Aorta (tissue), 5 donors: ENCODE measurements at regions of chr10 and their contacts with region 1.

Region 1: GRCh38 chr10:60444494-60445064 is 54.9 kb upstream of the ANK3 start:
- DNase-seq: no peak
- ATAC-seq: no peak
- H3K4me3 ChIP-seq: no peak overlapping the region
- H3K27ac ChIP-seq: no peak overlapping the region
- H3K4me1 ChIP-seq: peaks cover 2% of the 10 kb centered on the region in 2 donors
- H3K27me3 ChIP-seq: no peaks in the 10 kb centered on the region

Region 2: GRCh38 chr10:60252688-60253087 is 191.9 kb before region 1 on chr10:
- intact Hi-C with region 1: no loop called
- DNase-seq: no peak
- ATAC-seq: no peak
- H3K4me3 ChIP-seq: no peak overlapping the region
- H3K27ac ChIP-seq: no peak overlapping the region
- H3K4me1 ChIP-seq: no peaks in the 10 kb centered on the region
- H3K27me3 ChIP-seq: no peaks in the 10 kb centered on the region

Region 3: GRCh38 chr10:60480865-60481563 is 36.4 kb after region 1 on chr10:
- intact Hi-C with region 1: loop called in 1 of 2 experiments (anchors 5 kb)
- DNase-seq: no peak
- ATAC-seq: peak; percentile 59
- H3K4me3 ChIP-seq: no peak overlapping the region
- H3K27ac ChIP-seq: no peak overlapping the region
- H3K4me1 ChIP-seq: peaks cover 3 to 10% of the 10 kb centered on the region in 2 donors
- H3K27me3 ChIP-seq: no peaks in the 10 kb centered on the region

Region 4: DNA sequence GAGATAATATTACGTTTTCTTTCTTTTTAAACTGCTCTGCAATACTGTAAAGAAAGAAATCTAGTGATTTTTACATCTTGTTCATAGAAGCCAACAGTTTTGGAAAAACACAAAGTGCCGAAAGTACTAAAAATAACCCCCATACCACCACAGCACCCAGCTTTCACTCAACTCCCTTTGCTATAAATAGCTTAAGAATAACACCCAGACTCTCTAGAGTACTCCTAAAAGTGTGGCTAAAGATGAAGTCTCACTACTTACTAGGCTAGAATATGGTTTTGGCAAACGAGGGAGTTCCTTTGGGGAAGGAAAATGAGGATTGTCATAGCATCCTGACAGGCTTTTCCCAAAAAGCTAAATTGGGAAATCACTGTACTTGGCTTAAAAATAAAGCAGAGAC is 96.9 kb after region 1 on chr10:
- intact Hi-C with region 1: loop called (anchors 2 kb)
- DNase-seq: no peak
- ATAC-seq: no peak
- H3K4me3 ChIP-seq: no peak overlapping the region
- H3K27ac ChIP-seq: no peak overlapping the region
- H3K4me1 ChIP-seq: peaks cover 0 to 8% of the 10 kb centered on the region in 2 donors
- H3K27me3 ChIP-seq: no peaks in the 10 kb centered on the region

Region 5: DNA sequence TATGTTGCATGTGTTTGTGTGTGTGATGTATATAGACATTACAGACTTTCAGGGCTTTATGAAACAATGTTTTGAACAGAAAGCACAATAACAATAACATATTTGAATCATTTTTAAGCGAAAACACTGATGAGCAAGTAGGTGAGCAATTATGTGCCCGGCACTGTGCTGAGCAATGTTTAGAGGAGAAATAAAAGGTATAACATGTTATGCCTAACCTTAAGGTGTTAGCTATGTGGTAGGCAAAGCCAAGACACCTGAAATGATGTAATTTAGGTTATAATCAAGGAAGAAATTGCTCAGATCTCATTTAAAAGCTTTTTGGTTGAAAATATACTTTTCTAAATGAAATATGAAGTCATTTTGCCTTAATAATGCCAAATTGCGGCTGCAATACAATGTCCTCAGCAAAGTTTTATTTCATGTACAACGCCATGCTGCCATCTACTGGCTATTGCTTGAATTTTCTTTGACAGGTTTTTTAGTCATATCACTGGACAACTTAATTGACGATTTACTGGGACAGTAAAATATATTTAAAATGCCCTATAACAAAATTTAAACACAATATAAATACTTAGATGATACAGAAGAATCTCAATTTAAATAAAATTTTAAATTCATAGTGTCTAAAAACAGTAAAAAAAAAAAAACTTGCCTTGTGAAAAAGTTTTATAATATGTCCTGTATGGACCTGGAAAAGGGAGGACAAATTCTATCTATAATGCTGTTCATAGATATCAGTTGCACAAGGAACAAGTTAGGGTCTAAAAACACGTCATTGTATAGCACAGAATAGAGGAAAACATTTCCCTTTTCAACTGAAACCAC is 202.6 kb after region 1 on chr10:
- intact Hi-C with region 1: loop called (anchors 2 kb)
- DNase-seq: no peak
- ATAC-seq: no peak
- H3K4me3 ChIP-seq: no peak overlapping the region
- H3K27ac ChIP-seq: no peak overlapping the region
- H3K4me1 ChIP-seq: no peaks in the 10 kb centered on the region
- H3K27me3 ChIP-seq: no peaks in the 10 kb centered on the region

Region 6: GRCh38 chr10:60848126-60848525 is 403.5 kb after region 1 on chr10:
- intact Hi-C with region 1: no loop called
- DNase-seq: no peak
- ATAC-seq: no peak
- H3K4me3 ChIP-seq: no peak overlapping the region
- H3K27ac ChIP-seq: peak overlapping the region in 1 of 2 donors; percentile 39
- H3K4me1 ChIP-seq: no peaks in the 10 kb centered on the region
- H3K27me3 ChIP-seq: no peaks in the 10 kb centered on the region